Psoas muscle (tissue), 8 donors: ENCODE measurements at regions of chr15 and their contacts with region 1.

Region 1: DNA sequence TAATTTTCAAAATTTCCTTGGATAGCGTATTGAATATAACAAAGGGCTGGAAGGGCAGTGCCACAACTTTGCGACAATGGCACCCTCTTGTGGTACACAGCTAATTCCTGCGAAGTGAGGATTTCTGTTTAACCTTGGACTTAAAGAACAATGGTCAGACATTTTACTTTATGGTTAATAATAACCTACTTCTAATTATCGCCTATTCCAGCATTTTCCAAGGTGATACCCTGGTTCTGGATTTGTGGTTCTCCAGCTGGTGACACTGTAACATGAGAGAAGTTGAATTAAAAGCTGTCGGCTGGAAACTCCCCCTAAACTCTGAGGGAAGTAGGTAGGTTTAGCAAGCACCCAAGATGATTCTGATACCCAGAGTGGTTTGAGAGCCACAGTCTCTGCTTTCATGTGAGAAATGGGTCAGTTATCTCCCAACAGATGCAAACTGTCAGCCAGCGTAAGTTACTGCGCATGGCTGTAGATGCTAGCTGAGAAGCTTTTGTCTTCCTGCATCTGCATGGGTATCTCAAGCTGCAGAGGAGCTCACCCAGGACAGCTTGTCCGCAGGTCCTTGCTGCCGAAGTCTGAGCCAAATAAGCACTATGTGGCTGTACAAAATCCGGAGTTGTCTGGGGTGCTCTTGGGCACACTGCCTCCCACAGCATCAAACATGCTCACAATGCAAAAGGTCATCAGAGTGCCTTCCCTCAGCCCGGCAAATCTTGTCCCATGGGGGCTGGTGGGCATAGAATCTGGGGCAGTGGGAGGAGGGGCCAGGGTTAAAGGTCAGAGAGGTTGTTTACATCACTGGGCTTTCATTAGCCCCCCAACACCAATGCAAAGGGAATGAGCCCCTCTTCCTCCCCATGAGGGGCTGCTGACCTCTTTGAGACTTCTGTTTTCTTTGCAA is 6.6 kb upstream of the CHSY1 start:
- DNase-seq: peak in 1 of 2 donors; percentile 48
- ATAC-seq: peak; percentile 78 to 94 (median 82)
- H3K4me3 ChIP-seq: no peak overlapping the region
- H3K27ac ChIP-seq: no peak overlapping the region
- H3K4me1 ChIP-seq: no peaks in the 10 kb centered on the region
- H3K27me3 ChIP-seq: no peaks in the 10 kb centered on the region
- CTCF ChIP-seq: peak; percentile 90

Region 2: DNA sequence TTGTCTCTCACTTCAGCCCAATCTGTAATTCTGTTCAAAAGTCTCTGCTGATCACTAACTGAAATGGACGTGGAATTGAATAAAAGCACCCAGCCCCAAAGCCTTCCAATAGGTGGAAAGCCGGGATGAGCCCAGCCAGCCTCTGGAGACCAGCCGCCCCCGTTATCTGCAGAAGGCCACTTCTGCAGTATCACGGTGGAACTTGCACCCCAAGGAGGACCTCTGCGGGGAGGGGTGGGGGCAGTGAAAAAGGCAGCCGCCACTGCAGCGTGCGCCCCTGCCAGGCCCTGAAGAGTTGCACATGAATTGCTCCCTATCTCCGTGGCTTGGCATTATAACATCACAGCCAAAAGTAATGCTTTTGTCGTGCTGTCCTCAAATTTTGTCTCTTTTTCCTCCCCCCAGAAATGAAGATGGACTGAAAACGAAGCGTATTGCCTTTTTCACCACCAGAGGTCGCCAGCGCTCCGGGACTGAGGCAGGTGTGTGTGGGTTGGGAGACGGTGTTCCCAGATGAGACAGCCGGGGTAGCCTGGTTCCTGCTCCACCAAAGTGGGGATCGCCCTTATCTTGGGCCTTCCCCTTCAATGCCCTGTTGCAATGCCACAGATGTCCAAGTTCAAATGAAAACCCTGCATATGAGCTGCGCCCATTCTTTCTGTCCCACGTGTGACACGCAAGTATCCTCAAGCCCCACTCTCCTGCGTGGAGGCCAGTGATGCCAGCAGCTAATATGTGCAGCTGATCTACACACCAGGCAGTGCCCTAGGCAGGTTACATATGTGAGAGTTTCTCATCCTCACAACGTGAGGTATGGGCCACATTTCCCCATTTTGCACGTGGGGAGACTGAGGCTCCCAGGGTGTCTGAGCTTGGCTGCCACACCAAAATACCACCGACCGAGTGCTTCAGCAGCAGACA is 243.3 kb before region 1 on chr15:
- intact Hi-C with region 1: loop called (anchors 1 to 2 kb)
- DNase-seq: peak; percentile 69 to 82
- ATAC-seq: peak; percentile 70 to 91 (median 76)
- H3K4me3 ChIP-seq: no peak overlapping the region
- H3K27ac ChIP-seq: no peak overlapping the region
- H3K4me1 ChIP-seq: no peaks in the 10 kb centered on the region
- H3K27me3 ChIP-seq: no peaks in the 10 kb centered on the region
- CTCF ChIP-seq: peak; percentile 82

Region 3: GRCh38 chr15:101088788-101089583 is 169.5 kb before region 1 on chr15:
- intact Hi-C with region 1: loop called (anchors 1 to 2 kb)
- DNase-seq: peak; percentile 78 to 87
- ATAC-seq: peak; percentile 81 to 96 (median 91)
- H3K4me3 ChIP-seq: peak overlapping the region; percentile 48
- H3K27ac ChIP-seq: no peak overlapping the region
- H3K4me1 ChIP-seq: peaks cover 11% of the 10 kb centered on the region
- H3K27me3 ChIP-seq: no peaks in the 10 kb centered on the region
- CTCF ChIP-seq: peak; percentile 100